ENCODE measurements at regions of chr18 and their contacts with region 1.

Region 1: GRCh38 chr18:74040459-74041332 is 106.9 kb downstream of the FBXO15 start:
- DNase-seq: peak; percentile 85
- ATAC-seq: peak; percentile 99
- H3K4me3 Mint-ChIP-seq: no peak overlapping the region
- H3K27ac Mint-ChIP-seq: no peak overlapping the region
- H3K4me1 Mint-ChIP-seq: no peaks in the 10 kb centered on the region
- H3K27me3 Mint-ChIP-seq: no peaks in the 10 kb centered on the region
- CTCF ChIP-seq: peak; percentile 71

Region 2: DNA sequence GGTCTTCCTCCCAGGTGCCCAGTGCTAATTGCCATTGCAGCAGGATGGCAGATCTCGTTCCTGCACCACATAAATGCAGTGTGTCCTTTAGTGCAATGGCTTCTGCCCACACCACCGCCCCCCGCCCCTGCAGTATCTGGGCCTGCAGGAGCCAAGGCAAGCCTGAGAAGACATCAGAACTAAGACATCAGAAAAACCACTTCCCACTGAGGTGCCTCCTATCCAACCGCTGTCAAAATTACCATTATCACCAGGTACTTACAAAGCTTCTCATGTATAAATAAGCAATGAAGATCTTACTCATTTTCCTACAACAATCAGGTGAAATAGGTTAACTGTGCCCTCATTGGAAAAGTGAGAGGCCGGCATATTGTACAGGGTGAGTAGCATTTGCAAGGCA is 121.9 kb before region 1 on chr18:
- CTCF ChIA-PET with region 1: no interaction called
- POLR2A ChIA-PET with region 1: no interaction called
- intact Hi-C with region 1: no loop called
- DNase-seq: no peak
- ATAC-seq: no peak
- H3K4me3 Mint-ChIP-seq: no peak overlapping the region
- H3K27ac Mint-ChIP-seq: no peak overlapping the region
- H3K4me1 Mint-ChIP-seq: no peaks in the 10 kb centered on the region
- H3K27me3 Mint-ChIP-seq: peaks cover 2% of the 10 kb centered on the region
- CTCF ChIP-seq: no peak

Region 3: DNA sequence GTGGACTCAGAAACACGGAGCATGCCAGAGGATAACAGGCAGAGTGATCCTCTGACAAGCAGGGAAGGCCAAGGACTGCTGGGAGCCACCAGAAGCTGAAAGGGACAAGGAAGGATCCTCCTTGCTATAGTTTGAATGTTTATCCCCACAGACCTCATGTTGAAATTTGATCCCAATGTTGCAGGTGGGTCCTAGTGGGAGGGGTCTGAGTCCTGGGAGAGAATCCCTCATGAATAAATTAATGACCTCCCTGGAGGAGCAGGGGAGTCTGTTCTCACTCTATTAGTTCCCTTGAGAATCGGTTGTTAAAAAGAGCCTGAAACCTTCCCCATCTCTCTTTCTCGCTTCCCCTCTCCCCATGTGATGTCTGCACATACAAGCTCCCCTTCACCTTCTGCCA is 17.5 kb before region 1 on chr18:
- CTCF ChIA-PET with region 1: no interaction called
- POLR2A ChIA-PET with region 1: no interaction called
- intact Hi-C with region 1: no loop called
- DNase-seq: no peak
- ATAC-seq: no peak
- H3K4me3 Mint-ChIP-seq: no peak overlapping the region
- H3K27ac Mint-ChIP-seq: no peak overlapping the region
- H3K4me1 Mint-ChIP-seq: no peaks in the 10 kb centered on the region
- H3K27me3 Mint-ChIP-seq: peaks cover 8% of the 10 kb centered on the region
- CTCF ChIP-seq: no peak

Region 4: GRCh38 chr18:74050807-74051206 is 10.1 kb after region 1 on chr18:
- CTCF ChIA-PET with region 1: interaction called, 19 read pairs
- POLR2A ChIA-PET with region 1: no interaction called
- intact Hi-C with region 1: no loop called
- DNase-seq: no peak
- ATAC-seq: no peak
- H3K4me3 Mint-ChIP-seq: no peak overlapping the region
- H3K27ac Mint-ChIP-seq: no peak overlapping the region
- H3K4me1 Mint-ChIP-seq: peaks cover 6% of the 10 kb centered on the region
- H3K27me3 Mint-ChIP-seq: peaks cover 1% of the 10 kb centered on the region
- CTCF ChIP-seq: no peak

Region 5: GRCh38 chr18:74116633-74117554 is 76.2 kb after region 1 on chr18:
- CTCF ChIA-PET with region 1: interaction called, 30 read pairs
- POLR2A ChIA-PET with region 1: no interaction called
- intact Hi-C with region 1: loop called (anchors 2 kb)
- DNase-seq: peak; percentile 69
- ATAC-seq: peak; percentile 66
- H3K4me3 Mint-ChIP-seq: no peak overlapping the region
- H3K27ac Mint-ChIP-seq: no peak overlapping the region
- H3K4me1 Mint-ChIP-seq: peaks cover 27% of the 10 kb centered on the region
- H3K27me3 Mint-ChIP-seq: no peaks in the 10 kb centered on the region
- CTCF ChIP-seq: peak; percentile 64

Measured in activated CD8-positive, alpha-beta T cell treated with anti-CD3 and anti-CD28 coated beads for 36 hours (primary cell).